ENCODE measurements at regions of chr10 and their contacts with region 1.

Region 1: GRCh38 chr10:73886085-73886529 is 11.8 kb upstream of the CAMK2G start:
- DNase-seq: peak; percentile 90
- H3K4me3 ChIP-seq: no peak overlapping the region
- H3K27ac ChIP-seq: peak overlapping the region; percentile 84 to 91 (median 86)
- H3K4me1 ChIP-seq: peaks cover 0 to 34% (median 32%) of the 10 kb centered on the region in 4 donors
- H3K27me3 ChIP-seq: no peaks in the 10 kb centered on the region
- CTCF ChIP-seq: peak; percentile 76 to 93 (median 86)
- EP300 ChIP-seq: no peak
- POLR2A ChIP-seq: no peak

Region 2: DNA sequence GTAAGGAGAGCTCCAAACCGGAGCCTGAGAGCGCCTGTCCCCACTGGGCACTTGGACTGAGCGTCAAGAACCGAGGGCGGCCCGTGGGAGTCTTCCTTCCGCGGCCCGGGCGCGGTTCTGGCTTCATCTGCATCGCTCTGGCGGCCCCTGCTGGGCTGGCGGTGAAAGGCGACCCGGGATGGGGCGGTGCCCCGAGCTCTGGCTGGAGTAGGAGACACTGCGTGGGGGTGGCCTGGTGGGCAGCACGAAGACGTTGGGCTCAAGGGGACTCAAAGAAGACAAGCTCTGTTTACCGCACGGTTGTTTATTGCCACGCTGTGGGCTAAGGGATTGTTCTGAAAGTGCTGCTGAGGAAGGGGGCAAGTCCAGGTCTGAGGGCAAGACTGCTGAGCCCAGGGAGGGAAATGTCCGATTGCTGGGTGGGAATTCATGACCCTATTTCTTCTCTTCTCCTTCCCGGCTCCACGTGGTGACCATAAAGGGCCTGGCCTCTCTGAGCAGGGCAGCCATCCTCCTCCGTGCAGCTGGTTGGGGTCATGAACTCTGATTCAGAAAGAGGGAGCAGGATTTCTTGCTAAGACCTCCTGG is 54.6 kb after region 1 on chr10:
- intact Hi-C with region 1: loop called (anchors 1 kb)
- DNase-seq: peak; percentile 92
- H3K4me3 ChIP-seq: peak overlapping the region in 3 of 4 donors; percentile 11 to 25 (median 22)
- H3K27ac ChIP-seq: peak overlapping the region; percentile 45 to 75 (median 60)
- H3K4me1 ChIP-seq: peaks cover 0 to 15% (median 11%) of the 10 kb centered on the region in 4 donors
- H3K27me3 ChIP-seq: no peaks in the 10 kb centered on the region
- CTCF ChIP-seq: peak; percentile 91 to 95 (median 94)
- EP300 ChIP-seq: no peak
- POLR2A ChIP-seq: no peak

Region 3: DNA sequence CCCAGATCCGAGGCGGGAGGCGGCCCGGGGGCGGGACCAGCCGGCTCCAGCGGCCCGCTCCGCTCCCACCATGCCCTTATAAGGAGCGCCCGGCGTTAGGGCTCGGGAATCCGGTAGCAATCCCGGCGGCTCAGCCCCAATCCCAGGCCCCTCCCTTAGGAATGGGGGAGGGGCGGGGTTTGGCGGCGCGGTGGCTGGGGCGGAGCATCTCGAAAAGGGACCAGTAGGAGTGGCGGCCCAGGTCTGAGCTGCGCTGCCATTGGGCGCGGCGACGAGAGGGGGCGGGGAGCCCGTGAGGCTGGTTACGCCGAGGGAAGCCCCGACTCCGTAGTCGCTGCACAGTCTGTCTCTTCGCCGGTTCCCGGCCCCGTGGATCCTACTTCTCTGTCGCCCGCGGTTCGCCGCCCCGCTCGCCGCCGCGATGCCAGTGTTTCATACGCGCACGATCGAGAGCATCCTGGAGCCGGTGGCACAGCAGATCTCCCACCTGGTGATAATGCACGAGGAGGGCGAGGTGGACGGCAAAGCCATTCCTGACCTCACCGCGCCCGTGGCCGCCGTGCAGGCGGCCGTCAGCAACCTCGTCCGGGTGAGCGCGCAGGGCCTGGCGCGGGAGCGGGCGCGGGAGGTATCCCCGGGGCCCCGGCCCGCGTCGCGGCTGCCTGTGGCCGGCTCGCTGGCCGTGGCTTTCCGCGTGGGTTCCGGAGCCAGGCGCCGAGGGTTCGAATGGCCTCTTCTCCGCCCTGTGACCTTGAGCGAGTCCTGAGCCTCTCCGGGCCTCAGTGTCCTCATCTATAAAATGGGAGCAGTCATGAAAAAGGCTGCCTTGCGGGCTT is 111.9 kb after region 1 on chr10 and contains the start of gene VCL:
- intact Hi-C with region 1: loop called (anchors 5 kb)
- DNase-seq: peak; percentile 99
- H3K4me3 ChIP-seq: peak within 1 kb of the TSS; percentile 76 to 100 (median 92)
- H3K27ac ChIP-seq: peak within 1 kb of the TSS; percentile 96 to 100 (median 98)
- H3K4me1 ChIP-seq: peaks cover 0 to 43% (median 37%) of the 10 kb centered on the region in 4 donors
- H3K27me3 ChIP-seq: no peaks in the 10 kb centered on the region
- CTCF ChIP-seq: peak in 1 of 4 experiments; percentile 18
- EP300 ChIP-seq: peak in 1 of 4 donors; percentile 4
- POLR2A ChIP-seq: peak; percentile 99 to 100
- total RNA-seq, gene VCL: 179 to 451 (median 305) TPM

Region 4: DNA sequence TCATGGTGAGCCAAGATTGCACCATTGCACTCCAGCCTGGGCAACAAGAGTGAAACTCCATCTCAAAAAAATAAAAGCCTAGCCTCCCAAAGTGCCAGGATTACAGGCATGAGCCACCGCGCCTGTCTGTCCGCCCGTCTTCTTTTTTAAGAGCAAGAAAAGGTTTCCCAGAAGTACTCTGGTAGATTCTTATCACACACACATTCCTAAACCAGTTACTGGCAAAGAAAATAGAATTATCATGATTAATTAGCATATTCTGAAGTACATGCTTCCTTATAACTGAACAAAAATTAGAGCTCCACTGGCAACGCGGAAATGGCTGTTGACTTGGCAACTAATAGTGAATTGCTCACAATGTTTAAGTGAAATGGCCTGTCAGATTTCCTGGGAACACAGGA is 351.9 kb after region 1 on chr10:
- intact Hi-C with region 1: loop called (anchors 5 kb)
- DNase-seq: no peak
- H3K4me3 ChIP-seq: no peak overlapping the region
- H3K27ac ChIP-seq: peak overlapping the region in 2 of 4 donors; percentile 20 to 30
- H3K4me1 ChIP-seq: peaks cover 0 to 6% (median 0%) of the 10 kb centered on the region in 4 donors
- H3K27me3 ChIP-seq: no peaks in the 10 kb centered on the region
- CTCF ChIP-seq: no peak
- EP300 ChIP-seq: no peak
- POLR2A ChIP-seq: no peak

Measured in sigmoid colon (tissue), 7 donors.